ENCODE measurements at regions of chr2 and their contacts with region 1.

Region 1: DNA sequence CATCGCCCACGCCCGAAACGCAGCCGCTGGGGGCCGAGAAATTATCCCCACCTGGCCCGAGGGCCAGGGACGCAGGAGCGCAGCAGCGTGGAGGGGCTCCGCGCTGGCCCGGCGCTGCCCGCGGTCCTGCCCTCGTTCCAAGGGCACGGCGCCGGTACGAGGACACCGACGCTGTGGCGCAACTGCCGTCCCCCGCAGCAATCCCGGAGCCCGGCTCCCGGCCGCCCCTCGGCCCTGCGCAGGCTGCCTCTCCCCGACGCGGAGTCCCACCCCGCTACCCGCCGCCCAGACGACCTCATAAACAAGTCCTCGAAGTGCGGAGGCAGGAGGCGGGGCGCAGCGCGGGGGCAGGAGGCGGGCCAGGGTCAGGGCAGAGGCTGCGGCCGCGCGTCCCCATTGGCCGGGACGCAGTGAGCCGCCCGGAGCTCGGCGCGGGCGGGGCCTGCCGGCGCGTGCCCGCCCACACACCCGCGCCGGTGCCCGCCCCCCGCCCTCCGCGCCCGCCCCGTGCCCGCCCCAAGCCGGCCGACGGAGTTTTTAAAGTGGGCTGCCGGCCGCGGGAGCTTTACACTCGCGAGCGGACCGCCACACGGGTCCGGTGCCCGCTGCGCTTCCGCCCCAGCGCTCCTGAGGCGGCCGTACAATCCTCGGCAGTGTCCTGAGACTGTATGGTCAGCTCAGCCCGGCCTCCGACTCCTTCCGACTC is at the start of gene EPAS1:
- DNase-seq: peak; percentile 84
- H3K4me3 Mint-ChIP-seq: peak within 1 kb of the TSS; percentile 89
- H3K27ac Mint-ChIP-seq: peak within 1 kb of the TSS; percentile 70
- H3K4me1 Mint-ChIP-seq: peaks cover 21% of the 10 kb centered on the region
- H3K27me3 Mint-ChIP-seq: peaks cover 58% of the 10 kb centered on the region
- total RNA-seq, gene EPAS1: 100.0 and 102 TPM in 2 replicates

Region 2: DNA sequence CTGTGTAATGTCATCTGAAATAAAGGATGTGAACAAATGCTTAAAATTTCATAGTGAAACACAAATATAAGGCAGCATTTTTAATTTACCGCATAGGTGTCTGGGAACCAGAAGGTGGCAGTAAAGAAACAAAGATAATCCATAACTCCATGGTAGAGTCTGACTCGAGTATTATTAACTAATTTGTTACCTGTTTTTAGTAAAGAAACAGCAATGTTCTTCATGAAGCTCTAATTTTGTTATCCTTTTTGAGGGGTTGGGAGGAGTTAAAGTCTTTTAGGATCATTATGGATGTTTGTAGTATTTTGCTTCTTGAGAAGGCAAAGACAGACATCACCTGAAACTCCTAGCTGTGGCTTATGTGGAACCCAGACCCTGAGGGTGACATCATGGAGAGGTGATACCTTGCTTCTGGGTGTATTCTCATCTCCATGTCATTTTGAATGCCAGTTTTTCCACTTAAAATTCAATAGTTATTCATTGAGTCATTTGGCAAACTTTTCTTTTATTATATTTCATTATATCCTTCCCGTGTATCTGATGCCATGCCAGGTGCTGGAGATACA is 286.0 kb before region 1 on chr2:
- intact Hi-C with region 1: loop called (anchors 5 kb)
- DNase-seq: no peak
- H3K4me3 Mint-ChIP-seq: no peak overlapping the region
- H3K27ac Mint-ChIP-seq: peak overlapping the region; percentile 23
- H3K4me1 Mint-ChIP-seq: peaks cover 27% of the 10 kb centered on the region
- H3K27me3 Mint-ChIP-seq: no peaks in the 10 kb centered on the region

Region 3: GRCh38 chr2:46062637-46063412 is 234.2 kb before region 1 on chr2:
- intact Hi-C with region 1: loop called (anchors 1 kb)
- DNase-seq: peak; percentile 55
- H3K4me3 Mint-ChIP-seq: no peak overlapping the region
- H3K27ac Mint-ChIP-seq: no peak overlapping the region
- H3K4me1 Mint-ChIP-seq: peaks cover 28% of the 10 kb centered on the region
- H3K27me3 Mint-ChIP-seq: peaks cover 2% of the 10 kb centered on the region

Region 4: GRCh38 chr2:46239847-46240181 is 57.2 kb before region 1 on chr2:
- intact Hi-C with region 1: loop called (anchors 5 kb)
- DNase-seq: peak; percentile 63
- H3K4me3 Mint-ChIP-seq: peak overlapping the region; percentile 62
- H3K27ac Mint-ChIP-seq: peak overlapping the region; percentile 88
- H3K4me1 Mint-ChIP-seq: peaks cover 51% of the 10 kb centered on the region
- H3K27me3 Mint-ChIP-seq: no peaks in the 10 kb centered on the region

Region 5: GRCh38 chr2:46315103-46315890 is 18.3 kb after region 1 on chr2:
- intact Hi-C with region 1: no loop called
- DNase-seq: no peak
- H3K4me3 Mint-ChIP-seq: no peak overlapping the region
- H3K27ac Mint-ChIP-seq: peak overlapping the region; percentile 63
- H3K4me1 Mint-ChIP-seq: peaks cover 37% of the 10 kb centered on the region
- H3K27me3 Mint-ChIP-seq: peaks cover 7% of the 10 kb centered on the region

Region 6: GRCh38 chr2:46434851-46435273 is 137.9 kb after region 1 on chr2:
- intact Hi-C with region 1: loop called (anchors 5 kb)
- DNase-seq: no peak
- H3K4me3 Mint-ChIP-seq: peak overlapping the region; percentile 37
- H3K27ac Mint-ChIP-seq: peak overlapping the region; percentile 86
- H3K4me1 Mint-ChIP-seq: peaks cover 94% of the 10 kb centered on the region
- H3K27me3 Mint-ChIP-seq: no peaks in the 10 kb centered on the region

Region 7: DNA sequence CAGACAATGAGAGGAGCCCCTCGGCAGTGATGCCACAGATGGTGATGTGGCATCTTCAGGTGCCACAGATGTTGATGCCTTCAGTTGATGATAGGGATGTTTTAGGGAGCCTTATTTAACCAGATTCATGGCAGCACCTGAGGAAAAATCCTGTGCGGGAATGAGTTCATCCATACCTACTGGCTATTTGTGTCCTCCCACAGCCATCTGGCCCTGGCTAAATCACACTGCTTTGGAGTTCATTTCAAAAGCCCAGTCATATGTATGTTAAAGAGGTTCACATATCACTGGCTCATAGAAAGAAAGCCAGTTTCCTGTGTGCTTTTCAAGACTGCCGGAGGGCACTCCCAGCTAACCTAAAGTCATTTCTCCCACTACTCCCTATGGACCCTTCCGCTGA is 487.3 kb after region 1 on chr2:
- intact Hi-C with region 1: no loop called
- DNase-seq: no peak
- H3K4me3 Mint-ChIP-seq: no peak overlapping the region
- H3K27ac Mint-ChIP-seq: no peak overlapping the region
- H3K4me1 Mint-ChIP-seq: no peaks in the 10 kb centered on the region
- H3K27me3 Mint-ChIP-seq: peaks cover 23% of the 10 kb centered on the region